Activated CD4-positive, alpha-beta T cell treated with anti-CD3 and anti-CD28 coated beads, Interleukin-2, amount 10 ng/mL, durations not matched to agents 7 days and 5 days (primary cell): ENCODE measurements at regions of chr1 and their contacts with region 1.

Region 1: GRCh38 chr1:33127001-33127791 is 46.2 kb downstream of the AZIN2 start:
- DNase-seq: peak; percentile 99
- H3K4me3 Mint-ChIP-seq: peak overlapping the region; percentile 88
- H3K27ac Mint-ChIP-seq: peak overlapping the region; percentile 96
- H3K4me1 Mint-ChIP-seq: peaks cover 44% of the 10 kb centered on the region
- H3K27me3 Mint-ChIP-seq: no peaks in the 10 kb centered on the region

Region 2: DNA sequence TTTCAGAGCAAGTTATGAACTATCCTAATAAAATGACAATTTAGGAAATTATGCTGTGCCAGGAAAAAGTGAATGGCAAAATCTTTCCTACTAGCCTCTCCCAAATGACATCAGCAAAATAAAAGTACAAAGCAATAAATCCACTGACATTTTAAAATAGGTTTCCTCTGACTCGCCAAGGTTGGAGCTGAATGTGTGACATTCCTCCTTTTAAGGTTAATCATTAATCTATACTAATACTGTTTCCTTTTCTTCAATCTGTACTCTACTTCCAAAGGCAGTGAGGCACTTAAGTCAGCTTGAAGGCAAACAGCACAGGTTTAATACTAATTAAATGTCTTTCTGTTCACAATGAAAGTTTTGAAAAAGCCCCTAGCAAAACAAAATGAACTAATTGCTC is 178.3 kb before region 1 on chr1:
- CTCF ChIA-PET with region 1: no interaction called
- POLR2A ChIA-PET with region 1: no interaction called
- DNase-seq: no peak
- H3K4me3 Mint-ChIP-seq: no peak overlapping the region
- H3K27ac Mint-ChIP-seq: no peak overlapping the region
- H3K4me1 Mint-ChIP-seq: peaks cover 12% of the 10 kb centered on the region
- H3K27me3 Mint-ChIP-seq: no peaks in the 10 kb centered on the region

Region 3: DNA sequence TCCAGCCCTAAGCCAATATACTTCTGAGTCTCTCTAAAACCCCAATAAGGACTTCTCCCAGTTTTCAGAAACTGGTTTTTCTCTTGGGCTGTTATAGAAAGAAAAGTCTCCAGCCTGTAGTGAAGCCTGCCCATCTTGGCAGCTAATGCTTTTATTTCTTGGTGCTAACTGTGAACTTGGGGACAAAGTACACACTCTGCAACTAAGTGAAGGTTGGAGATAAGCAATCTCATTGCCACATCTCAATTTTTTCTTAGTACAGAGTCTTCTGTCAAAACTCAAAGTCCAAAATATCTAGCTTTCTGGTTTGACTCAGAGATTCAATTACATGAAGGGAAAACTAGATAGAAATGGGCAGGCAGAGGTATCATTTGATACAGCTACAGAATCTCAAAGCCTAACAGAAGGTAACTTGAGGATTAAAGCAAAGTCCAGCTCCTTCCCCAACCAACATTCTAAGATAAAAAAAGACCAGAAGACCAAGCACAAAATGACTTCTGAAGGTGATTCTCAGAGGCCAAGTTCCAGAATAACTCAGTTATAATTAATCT is 104.5 kb before region 1 on chr1:
- CTCF ChIA-PET with region 1: no interaction called
- POLR2A ChIA-PET with region 1: interaction called, 17 read pairs
- DNase-seq: no peak
- H3K4me3 Mint-ChIP-seq: no peak overlapping the region
- H3K27ac Mint-ChIP-seq: no peak overlapping the region
- H3K4me1 Mint-ChIP-seq: peaks cover 38% of the 10 kb centered on the region
- H3K27me3 Mint-ChIP-seq: no peaks in the 10 kb centered on the region

Region 4: DNA sequence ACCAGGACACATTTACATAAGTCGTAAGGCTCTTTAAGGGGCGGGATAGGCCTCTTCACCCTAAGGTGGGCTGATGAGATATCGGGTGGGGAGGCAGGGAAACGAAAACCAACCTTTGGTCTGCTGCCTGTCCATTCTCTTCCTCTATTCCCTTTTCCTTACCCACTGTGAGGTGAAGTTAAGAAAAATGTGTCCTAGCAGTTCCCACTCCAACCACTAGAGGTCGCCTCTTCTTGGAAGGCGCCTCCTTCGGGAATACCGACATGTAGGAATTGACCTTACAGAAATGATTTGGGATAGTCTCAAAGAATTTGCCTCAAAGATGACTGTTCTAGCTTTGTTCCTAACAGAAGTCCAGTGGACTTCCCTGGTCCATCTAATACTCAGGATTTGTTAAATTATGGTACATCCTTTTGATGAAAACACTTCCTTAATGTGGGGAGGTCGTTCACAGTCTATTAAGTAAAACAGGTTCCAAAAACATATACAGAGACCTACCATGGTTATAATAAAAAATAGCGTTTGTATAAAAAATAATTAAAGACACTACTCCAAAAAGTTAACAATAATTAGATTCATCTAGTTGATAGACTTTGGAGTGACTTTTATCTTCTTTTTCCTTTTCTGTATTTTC is 32.1 kb before region 1 on chr1:
- CTCF ChIA-PET with region 1: interaction called, 63 read pairs
- POLR2A ChIA-PET with region 1: interaction called, 6 read pairs
- DNase-seq: no peak
- H3K4me3 Mint-ChIP-seq: no peak overlapping the region
- H3K27ac Mint-ChIP-seq: no peak overlapping the region
- H3K4me1 Mint-ChIP-seq: peaks cover 67% of the 10 kb centered on the region
- H3K27me3 Mint-ChIP-seq: no peaks in the 10 kb centered on the region

Region 5: DNA sequence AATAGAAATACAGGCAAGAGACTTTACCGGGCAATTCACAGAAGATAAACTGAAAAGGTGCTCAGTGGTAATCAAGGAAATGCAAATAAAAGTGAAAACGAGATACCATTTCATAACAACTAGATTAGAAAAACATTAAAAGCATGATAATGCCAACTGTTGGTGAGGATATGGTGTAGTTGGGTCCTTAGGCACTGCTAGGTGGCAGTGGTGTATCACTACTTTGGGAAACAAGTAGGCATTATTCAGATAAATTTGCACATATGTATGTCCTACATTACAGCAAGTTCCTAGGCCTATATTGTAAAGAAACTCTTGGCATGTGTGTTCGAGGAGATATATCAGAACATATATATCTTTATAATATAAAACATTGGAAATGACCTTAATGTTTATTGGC is 15.2 kb before region 1 on chr1:
- CTCF ChIA-PET with region 1: interaction called, 39 read pairs
- POLR2A ChIA-PET with region 1: no interaction called
- DNase-seq: no peak
- H3K4me3 Mint-ChIP-seq: no peak overlapping the region
- H3K27ac Mint-ChIP-seq: no peak overlapping the region
- H3K4me1 Mint-ChIP-seq: peaks cover 5% of the 10 kb centered on the region
- H3K27me3 Mint-ChIP-seq: peaks cover 4% of the 10 kb centered on the region

Region 6: GRCh38 chr1:33137800-33138199 is 10.6 kb after region 1 on chr1:
- CTCF ChIA-PET with region 1: interaction called, 29 read pairs
- POLR2A ChIA-PET with region 1: interaction called, 4 read pairs
- DNase-seq: peak; percentile 36
- H3K4me3 Mint-ChIP-seq: no peak overlapping the region
- H3K27ac Mint-ChIP-seq: no peak overlapping the region
- H3K4me1 Mint-ChIP-seq: peaks cover 12% of the 10 kb centered on the region
- H3K27me3 Mint-ChIP-seq: no peaks in the 10 kb centered on the region

Region 7: DNA sequence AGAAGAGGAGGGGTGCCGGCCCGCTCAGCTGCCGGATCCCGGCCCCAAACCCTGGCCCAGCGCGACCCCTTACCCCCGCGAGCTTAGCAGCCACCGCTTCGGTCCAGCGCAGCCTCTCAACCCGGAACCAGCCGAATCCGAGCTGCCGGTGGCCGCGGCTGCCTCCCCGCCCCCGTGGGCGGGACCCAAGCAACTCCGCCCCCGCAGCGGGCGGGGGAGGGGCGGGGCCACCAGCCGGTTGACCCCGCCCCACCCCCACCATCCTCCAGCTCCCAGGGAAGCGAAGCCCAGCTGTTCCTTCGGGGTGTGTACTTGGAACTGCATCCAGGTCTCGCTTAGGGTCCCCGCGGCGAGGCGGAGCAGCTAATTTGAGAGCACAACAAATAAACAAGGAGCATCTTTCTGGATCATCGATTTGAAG is 54.7 kb after region 1 on chr1 and contains the start of gene TRIM62:
- CTCF ChIA-PET with region 1: interaction called, 12 read pairs
- POLR2A ChIA-PET with region 1: interaction called, 7 read pairs
- DNase-seq: peak; percentile 75
- H3K4me3 Mint-ChIP-seq: peak within 1 kb of the TSS; percentile 90
- H3K27ac Mint-ChIP-seq: peak within 1 kb of the TSS; percentile 92
- H3K4me1 Mint-ChIP-seq: peaks cover 21% of the 10 kb centered on the region
- H3K27me3 Mint-ChIP-seq: peaks cover 25% of the 10 kb centered on the region
- total RNA-seq, gene TRIM62: 9.3 to 10.2 TPM